Activated T-helper 1 cell treated with anti-CD3 and anti-CD28 coated beads, Interleukin-12 subunit alpha, Interleukin-12 subunit beta, Interleukin-2, Interleukin-4 antibody, amounts not matched to agents 30 ng/mL and 10 ng/mL and 1 ng/mL, durations not matched to agents 14 hours and 24 hours and 36 hours (primary cell): ENCODE measurements at regions of chr12 and their contacts with region 1.

Region 1: GRCh38 chr12:4506870-4507269 is 31.8 kb upstream of the RAD51AP1 start:
- DNase-seq: peak; percentile 29
- H3K4me3 Mint-ChIP-seq: peak overlapping the region; percentile 40
- H3K27ac Mint-ChIP-seq: peak overlapping the region; percentile 42
- H3K4me1 Mint-ChIP-seq: peaks cover 36% of the 10 kb centered on the region
- H3K27me3 Mint-ChIP-seq: no peaks in the 10 kb centered on the region

Region 2: DNA sequence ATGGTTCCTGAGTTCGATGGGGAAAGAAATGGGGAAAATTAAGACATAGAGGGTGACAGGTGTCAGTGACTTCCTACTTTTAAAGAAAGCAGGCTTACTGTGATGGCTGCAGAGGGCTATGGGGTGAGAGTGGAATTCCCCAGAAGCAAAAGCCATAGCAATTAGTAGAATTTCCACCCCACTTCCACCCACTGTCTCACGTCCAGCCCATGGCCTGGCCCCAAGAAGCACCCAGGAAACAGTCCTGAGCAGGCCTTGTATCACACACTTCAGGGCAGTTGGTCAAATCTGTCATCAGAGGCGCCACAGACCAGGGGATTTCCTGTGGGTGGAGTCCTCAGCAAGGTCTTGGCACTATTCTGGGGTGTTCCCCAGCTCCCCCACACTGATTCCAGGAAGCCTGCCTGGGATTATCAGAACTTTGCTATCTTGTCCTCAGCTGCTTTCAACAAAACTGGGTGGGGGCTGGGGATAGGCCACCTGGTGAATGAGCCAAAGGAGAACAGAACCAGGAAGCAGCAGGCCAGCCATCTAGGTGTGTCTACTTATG is 353.5 kb before region 1 on chr12:
- intact Hi-C with region 1: loop called (anchors 5 kb)
- DNase-seq: peak; percentile 78
- H3K4me3 Mint-ChIP-seq: peak overlapping the region; percentile 63
- H3K27ac Mint-ChIP-seq: peak overlapping the region; percentile 94
- H3K4me1 Mint-ChIP-seq: peaks cover 88% of the 10 kb centered on the region
- H3K27me3 Mint-ChIP-seq: no peaks in the 10 kb centered on the region

Region 3: DNA sequence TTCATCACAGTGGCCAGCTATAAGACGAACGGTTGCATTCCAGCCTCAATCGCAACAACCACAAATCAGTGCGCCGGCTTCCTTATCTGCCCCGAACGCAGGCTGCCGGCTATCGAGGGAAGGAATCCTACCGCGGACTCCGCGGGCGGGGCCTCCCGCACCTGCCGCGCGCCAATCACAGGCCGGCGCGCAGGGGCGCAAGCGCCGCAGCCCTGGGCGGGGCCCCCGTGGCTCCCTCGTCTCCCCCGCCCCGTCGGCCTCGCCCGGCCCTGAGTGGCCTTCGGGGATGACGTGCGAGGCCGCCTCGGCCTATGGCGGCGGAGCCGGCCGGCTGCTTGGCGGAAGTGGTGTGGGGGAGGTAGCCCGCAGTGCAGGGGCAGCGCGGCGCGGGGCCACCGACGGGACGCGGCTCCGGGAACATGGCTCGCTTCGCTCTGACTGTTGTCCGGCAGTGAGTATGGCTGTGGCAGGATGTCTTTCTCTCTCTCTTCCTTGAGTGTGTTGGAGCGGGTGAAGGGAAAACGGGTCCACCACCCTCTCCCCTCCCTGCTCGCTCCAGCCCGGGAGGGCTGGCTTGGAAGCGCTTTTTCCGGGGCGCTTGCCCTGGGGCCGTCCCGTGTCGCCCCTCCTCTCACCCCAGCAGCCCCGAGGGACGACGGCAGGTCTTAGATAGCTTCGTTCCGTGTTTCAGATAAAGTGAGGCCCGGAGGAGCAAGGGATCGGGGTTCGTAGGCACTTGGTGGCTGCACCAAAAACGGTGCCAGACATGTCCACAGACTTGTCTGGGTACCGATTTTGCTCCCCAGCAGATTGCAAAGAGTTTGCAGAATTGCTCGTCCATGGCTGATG is 185.8 kb before region 1 on chr12 and contains the start of gene TIGAR:
- intact Hi-C with region 1: loop called (anchors 1 kb)
- DNase-seq: peak; percentile 93
- H3K4me3 Mint-ChIP-seq: peak within 1 kb of the TSS; percentile 93
- H3K27ac Mint-ChIP-seq: peak within 1 kb of the TSS; percentile 93
- H3K4me1 Mint-ChIP-seq: peaks cover 45% of the 10 kb centered on the region
- H3K27me3 Mint-ChIP-seq: no peaks in the 10 kb centered on the region
- total RNA-seq, gene TIGAR: 14.4 TPM in 2 replicates

Region 4: DNA sequence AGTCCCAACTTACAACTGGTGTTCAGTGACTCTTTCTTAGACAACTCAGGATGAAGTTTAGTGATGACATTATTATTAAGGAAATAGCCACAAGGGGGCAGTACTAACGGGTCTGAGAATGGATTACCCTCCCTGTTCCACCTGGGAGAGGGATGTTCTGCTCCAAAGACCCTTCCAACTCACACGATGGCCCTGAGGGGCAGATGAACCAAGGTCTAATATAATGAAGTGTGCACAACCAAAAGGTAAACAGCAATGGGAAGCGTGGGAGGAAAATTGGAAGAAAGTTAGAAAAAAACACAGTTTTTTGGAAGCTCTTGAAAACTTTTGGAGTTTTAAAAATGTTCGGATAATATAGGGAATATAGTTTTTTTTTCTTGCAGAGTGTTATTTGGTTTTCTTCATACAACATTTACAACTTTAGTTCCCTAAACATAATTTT is 85.3 kb before region 1 on chr12:
- intact Hi-C with region 1: loop called (anchors 5 kb)
- DNase-seq: no peak
- H3K4me3 Mint-ChIP-seq: no peak overlapping the region
- H3K27ac Mint-ChIP-seq: no peak overlapping the region
- H3K4me1 Mint-ChIP-seq: peaks cover 5% of the 10 kb centered on the region
- H3K27me3 Mint-ChIP-seq: peaks cover 8% of the 10 kb centered on the region

Region 5: DNA sequence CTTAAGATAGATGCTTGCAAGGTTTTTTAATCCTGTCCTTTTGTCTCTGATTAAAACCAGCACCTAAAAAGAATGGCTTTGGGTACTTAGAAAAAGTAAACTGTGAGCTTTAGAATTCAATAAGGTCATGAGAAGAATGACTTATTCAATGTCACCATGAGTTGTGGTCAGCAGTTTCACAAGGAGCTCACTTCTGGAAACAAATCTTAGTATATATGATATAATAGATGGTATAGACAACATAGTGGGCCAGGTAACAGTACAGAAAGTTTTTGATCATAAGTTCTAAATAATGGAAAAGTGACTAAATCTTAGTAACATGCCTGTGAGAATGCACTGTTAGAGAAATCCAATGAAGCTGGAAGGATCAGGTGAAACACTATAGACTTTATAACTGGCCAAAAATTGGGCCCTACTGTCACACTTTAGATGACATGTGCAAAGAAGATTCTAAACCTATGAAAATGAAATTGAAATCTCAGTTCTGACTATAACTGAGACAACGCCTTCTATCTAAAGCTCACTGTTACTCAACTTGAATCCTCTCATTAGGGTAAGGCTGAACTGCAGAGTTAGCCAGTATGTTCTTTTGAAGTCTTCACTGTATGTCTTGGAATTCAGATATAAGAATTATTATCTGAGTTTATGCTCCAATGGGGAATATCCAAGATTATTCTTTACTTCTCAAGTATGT is 10.6 kb before region 1 on chr12:
- intact Hi-C with region 1: loop called (anchors 1 kb)
- DNase-seq: no peak
- H3K4me3 Mint-ChIP-seq: no peak overlapping the region
- H3K27ac Mint-ChIP-seq: peak overlapping the region; percentile 19
- H3K4me1 Mint-ChIP-seq: peaks cover 12% of the 10 kb centered on the region
- H3K27me3 Mint-ChIP-seq: no peaks in the 10 kb centered on the region